SK-N-SH (cell line): ENCODE measurements at regions of chr3 and their contacts with region 1.

Region 1: GRCh38 chr3:51498876-51499738 is 708 bp downstream of the DCAF1 start:
- DNase-seq: peak; percentile 88
- H3K4me3 ChIP-seq: peak overlapping the region; percentile 52 to 75
- H3K27ac ChIP-seq: peak overlapping the region; percentile 85 to 90
- H3K4me1 ChIP-seq: peaks cover 0 to 4% of the 10 kb centered on the region in 2 experiments; a peak in 2 of 4 replicates
- H3K27me3 ChIP-seq: no peaks in the 10 kb centered on the region
- CTCF ChIP-seq: no peak
- EP300 ChIP-seq: no peak
- RAD21 ChIP-seq: no peak

Region 2: GRCh38 chr3:51343918-51344687 is 155.0 kb before region 1 on chr3:
- CTCF ChIA-PET with region 1: no interaction called
- POLR2A ChIA-PET with region 1: no interaction called
- DNase-seq: no peak
- H3K4me3 ChIP-seq: no peak overlapping the region
- H3K27ac ChIP-seq: no peak overlapping the region
- H3K4me1 ChIP-seq: peaks cover 0 to 15% of the 10 kb centered on the region in 2 experiments; a peak in 2 of 4 replicates
- H3K27me3 ChIP-seq: no peaks in the 10 kb centered on the region
- CTCF ChIP-seq: no peak
- EP300 ChIP-seq: no peak
- RAD21 ChIP-seq: no peak

Region 3: GRCh38 chr3:51384726-51385473 is 114.2 kb before region 1 on chr3 and contains the start of gene MANF:
- CTCF ChIA-PET with region 1: interaction called, 4 read pairs
- POLR2A ChIA-PET with region 1: interaction called, 12 read pairs
- DNase-seq: peak; percentile 100
- H3K4me3 ChIP-seq: peak within 1 kb of the TSS; percentile 84 to 98
- H3K27ac ChIP-seq: peak within 1 kb of the TSS; percentile 71 to 93
- H3K4me1 ChIP-seq: peaks cover 21 to 40% of the 10 kb centered on the region in 2 experiments
- H3K27me3 ChIP-seq: no peaks in the 10 kb centered on the region
- CTCF ChIP-seq: no peak
- EP300 ChIP-seq: peak in 1 of 2 experiments; percentile 9; a peak in 1 of 4 replicates
- RAD21 ChIP-seq: no peak
- polyA plus RNA-seq, gene MANF: 118 and 121 TPM in 2 replicates

Region 4: DNA sequence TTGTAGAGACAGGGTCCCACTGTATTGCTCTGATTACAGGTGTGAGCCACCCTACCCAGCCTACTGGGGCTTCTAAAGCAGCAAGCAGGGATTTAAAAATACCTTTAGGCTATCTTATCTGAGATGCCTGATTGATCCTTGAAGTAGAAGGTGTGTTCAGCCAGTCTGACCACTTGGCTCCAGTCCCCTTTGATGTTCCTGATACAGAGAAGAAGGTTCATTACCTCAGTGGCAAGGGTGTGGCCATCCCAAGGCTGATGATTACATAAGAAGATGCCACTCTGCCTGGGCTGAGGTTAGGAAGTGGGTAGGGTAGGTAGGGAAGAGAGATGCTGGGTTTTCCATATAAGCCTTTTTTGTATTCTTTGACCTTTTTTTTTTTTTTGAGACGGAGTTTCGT is 11.9 kb after region 1 on chr3:
- CTCF ChIA-PET with region 1: interaction called, 14 read pairs
- POLR2A ChIA-PET with region 1: interaction called, 3 read pairs
- DNase-seq: no peak
- H3K4me3 ChIP-seq: no peak overlapping the region
- H3K27ac ChIP-seq: no peak overlapping the region
- H3K4me1 ChIP-seq: no peaks in the 10 kb centered on the region
- H3K27me3 ChIP-seq: no peaks in the 10 kb centered on the region
- CTCF ChIP-seq: no peak
- EP300 ChIP-seq: no peak
- RAD21 ChIP-seq: no peak

Region 5: DNA sequence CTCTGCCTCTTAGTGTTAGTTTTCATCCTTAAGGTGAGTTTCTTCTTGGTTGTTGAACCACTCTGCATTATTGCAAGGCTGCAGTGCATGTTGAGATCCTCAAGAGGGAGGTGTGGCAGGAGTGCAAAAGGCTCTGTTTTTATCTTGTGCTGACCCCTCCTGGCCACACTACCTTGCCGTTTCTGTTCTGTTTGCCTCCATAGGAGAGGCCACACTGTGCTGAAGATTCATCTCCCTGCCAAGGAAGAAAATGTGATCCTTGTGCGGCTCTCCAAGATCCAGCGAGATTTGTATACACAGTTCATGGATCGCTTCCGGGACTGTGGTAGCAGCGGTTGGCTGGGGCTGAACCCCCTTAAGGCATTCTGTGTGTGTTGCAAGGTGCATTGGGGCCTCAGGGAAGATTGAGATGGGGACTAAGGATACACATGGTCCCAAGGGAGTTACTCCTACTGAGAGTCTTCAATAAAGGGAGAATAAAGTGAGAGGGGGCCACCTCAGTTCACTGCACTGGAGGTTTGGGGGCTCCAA is 138.9 kb after region 1 on chr3:
- CTCF ChIA-PET with region 1: interaction called, 48 read pairs
- POLR2A ChIA-PET with region 1: no interaction called
- DNase-seq: peak; percentile 68
- H3K4me3 ChIP-seq: no peak overlapping the region; a peak in 1 of 4 replicates
- H3K27ac ChIP-seq: no peak overlapping the region
- H3K4me1 ChIP-seq: no peaks in the 10 kb centered on the region
- H3K27me3 ChIP-seq: no peaks in the 10 kb centered on the region
- CTCF ChIP-seq: peak; percentile 85
- EP300 ChIP-seq: no peak
- RAD21 ChIP-seq: peak; percentile 88

Region 6: GRCh38 chr3:51706788-51707731 is 208.0 kb after region 1 on chr3 and contains the start of gene GRM2:
- CTCF ChIA-PET with region 1: interaction called, 16 read pairs
- POLR2A ChIA-PET with region 1: no interaction called
- DNase-seq: peak; percentile 97
- H3K4me3 ChIP-seq: peak within 1 kb of the TSS in 1 of 2 experiments; percentile 43; a peak in 3 of 4 replicates
- H3K27ac ChIP-seq: no peak within 1 kb of the TSS
- H3K4me1 ChIP-seq: peaks cover 0 to 28% of the 10 kb centered on the region in 2 experiments; a peak in 1 of 4 replicates
- H3K27me3 ChIP-seq: no peaks in the 10 kb centered on the region
- CTCF ChIP-seq: no peak
- EP300 ChIP-seq: no peak
- RAD21 ChIP-seq: no peak
- polyA plus RNA-seq, gene GRM2: 0.15 and 0.24 TPM in 2 replicates